ENCODE measurements at regions of chr14 and their contacts with region 1.

Region 1: GRCh38 chr14:74217672-74218448 is 21.4 kb upstream of the VSX2 start:
- DNase-seq: peak; percentile 46
- ATAC-seq: peak; percentile 100
- H3K4me3 ChIP-seq: no peak overlapping the region
- H3K27ac ChIP-seq: no peak overlapping the region
- H3K4me1 ChIP-seq: no peaks in the 10 kb centered on the region
- H3K27me3 ChIP-seq: peaks cover 56% of the 10 kb centered on the region
- CTCF ChIP-seq: peak; percentile 87
- POLR2A ChIP-seq: no peak
- RAD21 ChIP-seq: peak; percentile 57

Region 2: DNA sequence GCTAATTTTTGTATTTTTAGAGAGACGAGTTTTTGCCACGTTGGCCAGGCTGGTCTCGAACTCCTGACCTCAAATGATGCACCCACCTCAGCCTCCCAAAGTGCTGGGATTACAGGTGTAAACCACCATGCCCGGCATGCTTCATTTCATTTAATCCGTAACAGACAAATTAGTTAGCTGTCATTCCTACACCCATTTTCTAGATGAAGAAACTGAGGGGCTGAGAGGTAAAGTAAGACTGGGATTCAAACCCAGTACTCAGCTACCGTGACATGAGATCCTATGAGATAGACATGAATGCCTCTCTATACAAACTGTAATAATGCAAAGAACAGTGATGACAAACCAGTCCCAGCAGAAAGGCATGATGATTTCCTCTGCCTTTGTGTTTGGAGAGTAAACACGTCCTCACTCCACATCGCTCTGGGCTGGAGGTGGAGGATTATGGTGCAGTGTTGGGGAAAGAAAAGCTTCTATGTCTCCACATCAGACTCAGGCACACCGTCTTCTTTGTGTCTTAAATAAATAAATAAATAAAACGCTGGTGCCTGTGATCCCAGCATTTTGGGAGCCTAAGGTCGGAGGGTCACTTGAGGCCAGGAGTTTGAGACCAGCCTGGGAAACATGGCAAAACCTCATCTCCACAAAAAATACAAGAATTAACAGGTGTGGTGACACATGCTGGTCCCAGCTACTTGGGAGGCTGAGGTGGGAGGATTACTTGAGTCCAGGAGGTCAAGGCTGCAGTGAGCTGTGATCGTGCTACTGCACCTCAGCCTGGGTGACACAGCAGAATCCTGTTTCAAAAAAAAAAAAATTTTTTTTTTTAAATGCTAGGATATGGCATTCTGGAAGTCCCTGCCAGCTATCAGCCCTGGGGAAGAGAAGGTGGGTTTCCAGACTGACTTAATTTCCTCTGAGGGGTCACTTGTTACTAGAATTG is 31.8 kb after region 1 on chr14:
- CTCF ChIA-PET with region 1: no interaction called
- POLR2A ChIA-PET with region 1: no interaction called
- dilution Hi-C with region 1: no loop called
- in situ Hi-C with region 1: no loop called
- intact Hi-C with region 1: loop called (anchors 1 kb)
- DNase-seq: no peak
- ATAC-seq: no peak
- H3K4me3 ChIP-seq: no peak overlapping the region
- H3K27ac ChIP-seq: no peak overlapping the region
- H3K4me1 ChIP-seq: no peaks in the 10 kb centered on the region
- H3K27me3 ChIP-seq: peaks cover 56% of the 10 kb centered on the region
- CTCF ChIP-seq: no peak
- POLR2A ChIP-seq: no peak
- RAD21 ChIP-seq: no peak

Region 3: DNA sequence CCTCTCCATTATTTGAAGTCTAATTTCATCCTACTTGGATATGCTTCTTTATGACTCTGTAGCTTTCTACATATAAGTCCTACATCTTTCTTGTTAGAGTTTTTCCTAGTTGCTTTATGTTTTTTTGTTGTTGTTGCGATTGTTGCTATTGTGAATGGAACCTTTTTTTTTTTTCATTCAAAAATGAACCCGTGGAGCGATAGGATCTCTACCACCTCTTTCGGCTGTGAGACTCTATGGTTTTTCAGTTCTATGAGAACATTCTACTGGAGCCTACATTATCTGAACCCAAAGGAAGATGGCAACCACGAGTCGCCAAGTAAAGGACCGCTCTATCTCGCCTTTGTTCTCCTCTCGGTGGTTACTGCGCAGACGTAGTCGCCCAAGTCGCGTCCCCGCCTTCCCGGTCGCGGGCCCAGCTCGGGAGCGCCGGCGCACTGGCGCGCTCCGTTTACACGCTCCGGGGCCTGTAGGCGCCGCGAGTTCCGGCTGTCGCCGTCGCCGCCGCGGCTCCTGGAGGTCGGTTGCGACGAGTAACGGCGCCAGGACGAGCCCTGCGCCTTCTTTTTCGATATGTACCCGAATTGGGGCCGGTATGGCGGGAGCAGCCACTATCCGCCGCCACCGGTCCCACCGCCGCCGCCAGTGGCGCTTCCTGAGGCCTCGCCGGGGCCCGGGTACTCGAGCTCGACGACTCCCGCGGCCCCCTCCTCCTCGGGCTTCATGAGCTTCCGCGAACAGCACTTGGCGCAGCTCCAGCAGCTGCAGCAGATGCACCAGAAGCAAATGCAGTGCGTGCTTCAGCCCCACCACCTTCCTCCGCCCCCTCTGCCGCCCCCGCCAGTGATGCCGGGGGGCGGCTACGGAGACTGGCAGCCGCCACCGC is 545.3 kb after region 1 on chr14 and contains the start of gene YLPM1:
- CTCF ChIA-PET with region 1: no interaction called
- POLR2A ChIA-PET with region 1: no interaction called
- dilution Hi-C with region 1: no loop called
- in situ Hi-C with region 1: no loop called
- intact Hi-C with region 1: no loop called
- DNase-seq: peak; percentile 98
- ATAC-seq: peak; percentile 98
- H3K4me3 ChIP-seq: peak within 1 kb of the TSS; percentile 75
- H3K27ac ChIP-seq: peak within 1 kb of the TSS; percentile 78
- H3K4me1 ChIP-seq: peaks cover 4% of the 10 kb centered on the region; the same call in 1 of the 2 replicates
- H3K27me3 ChIP-seq: no peaks in the 10 kb centered on the region
- CTCF ChIP-seq: peak; percentile 75
- POLR2A ChIP-seq: peak; percentile 91
- RAD21 ChIP-seq: 0 out of 2 replicates have a peak, but pooled peaks have one; percentile 6
- total RNA-seq, gene YLPM1: 8.2 and 16.4 TPM in 2 replicates